ENCODE measurements at regions of chr2 and their contacts with region 1.

Region 1: DNA sequence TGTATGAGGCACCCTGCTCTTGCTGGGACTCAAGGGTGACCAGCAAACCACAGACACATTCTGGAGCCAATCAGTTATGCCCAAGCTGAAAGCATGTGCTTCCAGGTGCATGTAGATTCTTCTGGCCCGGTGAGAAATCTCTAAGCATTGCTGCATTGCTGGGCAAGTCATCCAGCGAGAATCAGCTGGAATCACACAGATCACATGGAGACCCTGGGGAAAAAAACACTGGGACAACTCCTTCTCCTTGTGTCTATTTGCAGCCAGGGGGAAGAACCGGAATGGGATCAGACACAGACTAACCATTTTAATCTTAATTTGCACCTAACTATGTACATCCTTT is 119.7 kb upstream of the KLF7 start:
- DNase-seq: no peak
- H3K4me3 ChIP-seq: no peak overlapping the region
- H3K4me3 Mint-ChIP-seq: no peak overlapping the region
- H3K27ac Mint-ChIP-seq: no peak overlapping the region
- H3K4me1 ChIP-seq: peaks cover 9% of the 10 kb centered on the region
- H3K4me1 Mint-ChIP-seq: peaks cover 12% of the 10 kb centered on the region
- H3K27me3 ChIP-seq: no peaks in the 10 kb centered on the region; the same call in 1 of the 2 replicates
- H3K27me3 Mint-ChIP-seq: peaks cover 5% of the 10 kb centered on the region
- CTCF ChIP-seq: no peak

Region 2: DNA sequence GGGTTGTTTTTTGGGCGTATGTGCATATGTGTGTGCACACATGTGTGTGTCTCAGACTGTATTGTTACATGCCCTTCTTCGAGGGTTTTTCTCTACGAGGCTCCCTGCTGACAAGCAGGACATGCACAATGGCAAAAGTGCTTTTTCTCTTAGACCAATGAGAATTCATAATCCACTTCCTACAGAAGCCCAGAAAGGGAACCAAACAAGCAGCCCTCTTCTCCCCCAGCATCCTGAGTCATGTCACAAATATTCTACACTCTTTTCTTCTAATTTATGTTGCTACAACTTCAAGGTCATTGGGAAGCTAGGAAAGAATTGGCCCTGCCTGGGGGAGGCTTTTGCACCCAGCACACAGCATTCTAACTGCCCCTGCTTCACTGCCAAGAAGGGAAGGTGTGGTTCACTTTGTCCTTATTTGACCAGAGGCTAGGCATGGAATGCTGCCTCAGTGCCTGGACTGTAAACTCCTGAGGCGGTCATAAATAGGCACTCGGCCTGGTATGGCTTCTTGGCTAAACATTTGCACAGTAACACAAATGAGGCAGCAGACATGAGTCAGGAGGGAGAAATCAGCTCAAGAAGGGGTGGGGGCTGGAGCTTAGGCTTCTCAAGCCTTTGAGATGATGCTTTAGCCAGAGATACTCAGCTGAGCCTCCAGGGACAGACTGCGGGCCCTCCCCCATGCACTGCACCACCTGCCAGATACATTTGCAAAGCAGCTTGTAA is 27.0 kb before region 1 on chr2:
- CTCF ChIA-PET with region 1: no interaction called
- POLR2A ChIA-PET with region 1: no interaction called
- intact Hi-C with region 1: no loop called
- DNase-seq: peak; percentile 52 to 70
- H3K4me3 ChIP-seq: no peak overlapping the region
- H3K4me3 Mint-ChIP-seq: no peak overlapping the region
- H3K27ac Mint-ChIP-seq: peak overlapping the region; percentile 67
- H3K4me1 ChIP-seq: peaks cover 19% of the 10 kb centered on the region
- H3K4me1 Mint-ChIP-seq: peaks cover 17% of the 10 kb centered on the region
- H3K27me3 ChIP-seq: no peaks in the 10 kb centered on the region
- H3K27me3 Mint-ChIP-seq: peaks cover 2% of the 10 kb centered on the region
- CTCF ChIP-seq: no peak

Region 3: GRCh38 chr2:208265801-208266552 is 980.5 kb after region 1 on chr2 and contains the start of gene PIKFYVE:
- CTCF ChIA-PET with region 1: no interaction called
- POLR2A ChIA-PET with region 1: interaction called, 18 read pairs
- intact Hi-C with region 1: no loop called
- DNase-seq: peak; percentile 96 to 98
- H3K4me3 ChIP-seq: peak within 1 kb of the TSS; percentile 71
- H3K4me3 Mint-ChIP-seq: peak within 1 kb of the TSS; percentile 87
- H3K27ac Mint-ChIP-seq: peak within 1 kb of the TSS; percentile 94
- H3K4me1 ChIP-seq: peaks cover 10% of the 10 kb centered on the region; the same call in 1 of the 2 replicates
- H3K4me1 Mint-ChIP-seq: peaks cover 32% of the 10 kb centered on the region
- H3K27me3 ChIP-seq: no peaks in the 10 kb centered on the region
- H3K27me3 Mint-ChIP-seq: no peaks in the 10 kb centered on the region
- CTCF ChIP-seq: no peak
- total RNA-seq, gene PIKFYVE: 27.9 and 31.2 TPM in 2 replicates